MCF 10A (cell line): ENCODE measurements at regions of chr5 and their contacts with region 1.

Region 1: GRCh38 chr5:10358999-10359398 is 5.5 kb downstream of the MARCHF6 start:
- DNase-seq: no peak
- H3K4me3 Mint-ChIP-seq: no peak overlapping the region
- H3K27ac Mint-ChIP-seq: no peak overlapping the region
- H3K4me1 Mint-ChIP-seq: peaks cover 26% of the 10 kb centered on the region
- H3K27me3 Mint-ChIP-seq: no peaks in the 10 kb centered on the region
- CTCF ChIP-seq: no peak

Region 2: DNA sequence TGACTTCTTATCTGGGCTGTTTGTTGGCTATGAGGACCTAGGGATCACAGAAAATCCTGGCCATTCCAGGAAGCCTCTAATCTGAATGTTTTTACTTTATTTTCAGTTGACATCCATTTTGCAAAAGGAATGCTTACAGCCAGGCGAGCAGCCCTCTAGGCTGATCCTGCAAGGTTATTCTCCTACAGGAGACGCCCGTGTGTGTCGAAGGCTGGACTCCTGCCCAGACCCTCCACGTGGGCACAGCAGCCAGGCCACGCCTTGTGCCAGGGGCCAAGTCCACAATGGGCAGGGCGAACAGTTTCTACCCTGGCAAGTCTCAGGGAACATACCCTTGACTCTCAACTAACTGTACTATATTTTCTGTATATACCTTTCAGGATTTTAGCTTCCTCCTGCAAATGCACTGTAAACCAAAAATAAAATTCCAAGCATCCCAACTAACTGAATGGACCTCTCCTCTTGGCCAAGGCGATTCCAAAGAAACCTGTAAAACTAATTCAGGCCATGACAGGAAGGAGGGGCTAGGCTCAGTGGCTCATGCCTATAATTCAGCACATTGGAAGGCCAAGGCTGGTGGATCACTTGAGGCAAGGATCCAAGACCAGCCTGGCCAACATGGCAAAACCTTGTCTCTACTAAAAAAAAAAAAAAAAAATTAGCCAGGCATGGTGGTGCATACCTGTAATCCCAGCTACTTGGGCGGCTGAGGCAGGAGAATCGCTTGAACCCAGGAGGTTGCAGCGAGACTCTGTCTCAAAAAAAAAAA is 57.0 kb before region 1 on chr5:
- CTCF ChIA-PET with region 1: interaction called, 8 read pairs
- POLR2A ChIA-PET with region 1: interaction called, 226 read pairs
- intact Hi-C with region 1: no loop called
- DNase-seq: peak; percentile 92
- H3K4me3 Mint-ChIP-seq: peak overlapping the region; percentile 54
- H3K27ac Mint-ChIP-seq: peak overlapping the region; percentile 46
- H3K4me1 Mint-ChIP-seq: peaks cover 55% of the 10 kb centered on the region
- H3K27me3 Mint-ChIP-seq: no peaks in the 10 kb centered on the region
- CTCF ChIP-seq: no peak